Activated CD4-positive, alpha-beta memory T cell treated with anti-CD3 and anti-CD28 coated beads for 36 hours (primary cell): ENCODE measurements at regions of chr14 and their contacts with region 1.

Region 1: GRCh38 chr14:94161981-94162380 is 12.1 kb upstream of the PPP4R4 start:
- DNase-seq: peak; percentile 32
- H3K4me3 Mint-ChIP-seq: no peak overlapping the region
- H3K27ac Mint-ChIP-seq: peak overlapping the region; percentile 55
- H3K4me1 Mint-ChIP-seq: peaks cover 81% of the 10 kb centered on the region
- H3K27me3 Mint-ChIP-seq: no peaks in the 10 kb centered on the region

Region 2: GRCh38 chr14:94120667-94121340 is 41.2 kb before region 1 on chr14:
- CTCF ChIA-PET with region 1: no interaction called
- POLR2A ChIA-PET with region 1: no interaction called
- intact Hi-C with region 1: no loop called
- DNase-seq: no peak
- H3K4me3 Mint-ChIP-seq: no peak overlapping the region
- H3K27ac Mint-ChIP-seq: no peak overlapping the region
- H3K4me1 Mint-ChIP-seq: no peaks in the 10 kb centered on the region
- H3K27me3 Mint-ChIP-seq: peaks cover 6% of the 10 kb centered on the region

Region 3: DNA sequence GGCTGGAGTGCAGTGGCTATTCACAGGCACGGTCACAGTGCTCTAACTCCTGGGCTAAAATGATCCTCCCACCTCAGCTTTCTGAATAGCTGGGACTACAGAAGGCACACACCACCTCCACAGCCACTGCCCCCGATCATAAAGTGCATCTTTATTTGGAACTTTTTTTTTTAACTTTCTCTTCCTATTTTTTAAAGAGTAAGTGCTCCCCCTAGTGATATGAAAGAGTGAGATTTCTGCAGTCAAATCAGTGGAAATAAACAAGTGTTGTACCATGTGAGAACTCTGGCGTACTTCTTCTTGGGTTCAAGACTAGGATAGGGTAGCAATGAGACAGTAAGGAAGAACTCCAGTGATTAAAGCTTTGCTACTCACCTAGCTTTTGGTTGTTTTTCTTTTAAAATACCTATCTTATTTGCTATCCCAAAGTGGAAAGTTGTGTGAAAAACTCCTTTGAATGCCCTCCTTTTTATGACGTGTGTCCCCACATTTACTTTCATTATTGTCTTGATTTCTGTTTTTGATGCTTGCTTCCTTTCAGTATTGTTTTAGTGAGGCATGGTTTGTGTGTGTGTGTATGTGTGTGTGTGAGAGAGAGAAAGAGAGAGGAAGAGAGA is 18.8 kb after region 1 on chr14:
- CTCF ChIA-PET with region 1: interaction called, 13 read pairs
- POLR2A ChIA-PET with region 1: interaction called, 3 read pairs
- intact Hi-C with region 1: loop called (anchors 1 kb)
- DNase-seq: no peak
- H3K4me3 Mint-ChIP-seq: peak overlapping the region; percentile 54
- H3K27ac Mint-ChIP-seq: peak overlapping the region; percentile 67
- H3K4me1 Mint-ChIP-seq: peaks cover 50% of the 10 kb centered on the region
- H3K27me3 Mint-ChIP-seq: no peaks in the 10 kb centered on the region

Region 4: DNA sequence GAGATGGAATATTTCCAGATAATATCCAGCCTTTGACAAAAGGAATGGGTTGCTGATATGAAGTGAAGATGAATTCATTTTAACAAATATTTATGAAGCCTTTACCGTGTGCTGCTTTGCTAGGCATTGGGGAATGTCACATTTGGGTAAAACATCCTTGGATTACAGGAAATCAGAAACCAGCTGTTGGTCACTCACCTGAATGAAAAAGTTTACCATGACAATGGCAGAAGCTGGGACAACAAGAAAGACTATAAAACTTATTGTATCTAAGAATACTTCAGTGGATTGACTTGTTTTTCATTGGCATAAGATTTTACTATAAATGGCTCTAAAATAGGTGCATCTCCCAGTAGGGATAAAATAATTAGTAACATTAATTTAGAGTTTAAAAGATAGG is 31.8 kb after region 1 on chr14:
- CTCF ChIA-PET with region 1: no interaction called
- POLR2A ChIA-PET with region 1: no interaction called
- intact Hi-C with region 1: no loop called
- DNase-seq: no peak
- H3K4me3 Mint-ChIP-seq: no peak overlapping the region
- H3K27ac Mint-ChIP-seq: no peak overlapping the region
- H3K4me1 Mint-ChIP-seq: no peaks in the 10 kb centered on the region
- H3K27me3 Mint-ChIP-seq: peaks cover 2% of the 10 kb centered on the region

Region 5: GRCh38 chr14:94217116-94217515 is 55.1 kb after region 1 on chr14:
- CTCF ChIA-PET with region 1: no interaction called
- POLR2A ChIA-PET with region 1: no interaction called
- intact Hi-C with region 1: no loop called
- DNase-seq: no peak
- H3K4me3 Mint-ChIP-seq: no peak overlapping the region
- H3K27ac Mint-ChIP-seq: no peak overlapping the region
- H3K4me1 Mint-ChIP-seq: peaks cover 3% of the 10 kb centered on the region
- H3K27me3 Mint-ChIP-seq: no peaks in the 10 kb centered on the region